ENCODE measurements at regions of chr6 and their contacts with region 1.

Region 1: GRCh38 chr6:14265049-14266021 is 147.8 kb downstream of the CD83 start:
- DNase-seq: peak in 1 of 2 experiments; percentile 43
- H3K4me3 ChIP-seq: no peak overlapping the region
- H3K27ac ChIP-seq: no peak overlapping the region
- H3K4me1 ChIP-seq: no peaks in the 10 kb centered on the region; a peak in 1 of 7 replicates
- H3K27me3 ChIP-seq: no peaks in the 10 kb centered on the region
- CTCF ChIP-seq: peak; percentile 12 to 48 (median 19); a peak in 3 of 4 replicates
- EP300 ChIP-seq: no peak
- POLR2A ChIP-seq: no peak
- RAD21 ChIP-seq: peak in 1 of 2 experiments; percentile 22; a peak in 1 of 4 replicates

Region 2: DNA sequence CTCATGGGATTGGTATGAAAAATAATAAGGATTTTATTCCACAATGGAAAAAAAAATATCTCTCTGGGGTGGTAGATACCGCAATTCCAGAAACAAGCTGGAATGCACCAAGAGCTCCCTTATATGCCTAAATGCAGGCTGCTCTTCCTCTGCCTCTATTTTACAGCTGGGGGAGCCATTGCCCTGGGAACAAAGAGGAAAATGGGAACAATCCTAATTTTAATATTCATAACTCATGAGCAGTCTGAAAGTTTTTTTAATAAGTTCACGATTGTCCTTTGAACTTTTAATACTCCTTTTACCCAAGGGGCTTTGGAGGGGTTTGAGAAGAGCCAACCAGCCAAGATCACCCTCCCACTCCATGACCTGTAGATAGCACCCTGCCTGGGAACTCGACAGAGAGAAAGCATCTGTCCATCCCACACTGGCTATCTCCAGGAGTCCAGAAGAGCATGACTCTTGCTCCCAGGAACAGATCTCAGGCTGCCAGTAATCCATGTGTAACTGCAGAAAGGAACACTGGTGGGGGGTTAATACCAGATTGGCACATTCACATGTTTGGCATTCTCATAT is 73.0 kb before region 1 on chr6:
- CTCF ChIA-PET with region 1: no interaction called
- POLR2A ChIA-PET with region 1: no interaction called
- DNase-seq: no peak
- H3K4me3 ChIP-seq: no peak overlapping the region
- H3K27ac ChIP-seq: no peak overlapping the region
- H3K4me1 ChIP-seq: peaks cover 0 to 15% (median 5%) of the 10 kb centered on the region in 4 experiments; a peak in 6 of 7 replicates
- H3K27me3 ChIP-seq: peaks cover 0 to 2% (median 0%) of the 10 kb centered on the region in 4 experiments; a peak in 1 of 7 replicates
- CTCF ChIP-seq: no peak
- EP300 ChIP-seq: no peak
- POLR2A ChIP-seq: no peak
- RAD21 ChIP-seq: peak; percentile 22 to 39; a peak in 3 of 4 replicates

Region 3: DNA sequence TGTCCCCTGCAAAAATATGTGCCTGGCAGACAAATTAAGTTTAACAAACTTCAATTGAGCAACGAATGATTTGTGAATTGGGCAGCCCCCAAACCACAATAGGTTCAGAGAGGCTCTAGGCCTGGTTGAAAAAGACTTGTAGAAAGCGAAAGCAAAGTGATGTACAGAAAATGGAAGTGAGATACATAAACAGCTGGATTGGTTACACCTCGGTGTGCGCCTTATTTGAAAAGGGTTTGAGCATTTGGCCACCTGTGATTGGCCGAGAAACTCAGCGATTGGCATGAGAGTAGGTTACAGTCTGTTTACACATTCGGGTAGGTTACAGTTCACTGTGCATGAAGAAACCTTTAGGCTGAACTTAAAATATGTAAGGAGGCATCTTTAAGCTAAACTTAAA is 10.8 kb before region 1 on chr6:
- CTCF ChIA-PET with region 1: interaction called, 13 read pairs
- POLR2A ChIA-PET with region 1: interaction called, 4 read pairs
- DNase-seq: peak in 1 of 2 experiments; percentile 22
- H3K4me3 ChIP-seq: no peak overlapping the region
- H3K27ac ChIP-seq: no peak overlapping the region
- H3K4me1 ChIP-seq: peaks cover 3 to 7% (median 4%) of the 10 kb centered on the region in 4 experiments; a peak in 5 of 7 replicates
- H3K27me3 ChIP-seq: no peaks in the 10 kb centered on the region
- CTCF ChIP-seq: no peak
- EP300 ChIP-seq: no peak
- POLR2A ChIP-seq: no peak
- RAD21 ChIP-seq: no peak